Activated CD4-positive, alpha-beta T cell treated with anti-CD3 and anti-CD28 coated beads for 36 hours (primary cell): ENCODE measurements at regions of chr9 and their contacts with region 1.

Region 1: DNA sequence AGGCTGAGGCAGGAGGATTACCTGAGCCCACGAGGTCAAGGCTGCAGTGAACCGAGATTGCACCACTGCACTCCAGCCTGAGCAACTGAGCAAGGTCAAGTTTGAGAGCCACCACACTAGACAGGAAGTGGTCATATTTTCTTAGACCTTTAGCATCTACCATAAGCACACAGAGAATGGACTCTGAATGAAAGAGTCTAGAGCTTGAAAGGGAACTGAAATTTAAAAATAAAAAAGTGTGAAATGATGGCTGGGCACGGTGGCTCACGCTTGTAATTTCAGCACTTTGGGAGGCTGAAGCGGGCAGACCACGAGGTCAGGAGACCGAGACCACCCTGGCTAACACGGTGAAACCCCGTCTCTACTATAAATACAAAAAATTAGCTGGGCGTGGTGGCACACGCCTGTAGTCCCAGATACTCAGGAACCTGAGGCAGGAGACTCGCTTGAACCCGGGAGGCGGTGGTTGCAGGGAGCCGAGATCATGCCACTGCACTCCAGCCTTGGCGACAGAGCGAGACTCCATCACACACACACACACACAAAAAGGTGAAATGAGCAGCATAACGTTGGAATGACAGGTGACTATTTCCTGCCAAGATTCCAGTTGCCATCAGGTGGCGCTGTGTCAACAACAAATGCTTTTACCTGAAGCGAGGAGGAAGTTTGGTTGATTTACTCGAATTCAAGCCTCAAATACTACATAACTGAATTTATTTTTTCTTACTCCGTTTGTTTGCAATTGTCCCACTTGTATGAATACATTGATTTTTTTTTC is 21.3 kb upstream of the AK3 start:
- DNase-seq: peak; percentile 90
- ATAC-seq: peak; percentile 86
- H3K4me3 Mint-ChIP-seq: peak overlapping the region; percentile 43
- H3K27ac Mint-ChIP-seq: peak overlapping the region; percentile 55
- H3K4me1 Mint-ChIP-seq: peaks cover 15% of the 10 kb centered on the region
- H3K27me3 Mint-ChIP-seq: peaks cover 7% of the 10 kb centered on the region

Region 2: DNA sequence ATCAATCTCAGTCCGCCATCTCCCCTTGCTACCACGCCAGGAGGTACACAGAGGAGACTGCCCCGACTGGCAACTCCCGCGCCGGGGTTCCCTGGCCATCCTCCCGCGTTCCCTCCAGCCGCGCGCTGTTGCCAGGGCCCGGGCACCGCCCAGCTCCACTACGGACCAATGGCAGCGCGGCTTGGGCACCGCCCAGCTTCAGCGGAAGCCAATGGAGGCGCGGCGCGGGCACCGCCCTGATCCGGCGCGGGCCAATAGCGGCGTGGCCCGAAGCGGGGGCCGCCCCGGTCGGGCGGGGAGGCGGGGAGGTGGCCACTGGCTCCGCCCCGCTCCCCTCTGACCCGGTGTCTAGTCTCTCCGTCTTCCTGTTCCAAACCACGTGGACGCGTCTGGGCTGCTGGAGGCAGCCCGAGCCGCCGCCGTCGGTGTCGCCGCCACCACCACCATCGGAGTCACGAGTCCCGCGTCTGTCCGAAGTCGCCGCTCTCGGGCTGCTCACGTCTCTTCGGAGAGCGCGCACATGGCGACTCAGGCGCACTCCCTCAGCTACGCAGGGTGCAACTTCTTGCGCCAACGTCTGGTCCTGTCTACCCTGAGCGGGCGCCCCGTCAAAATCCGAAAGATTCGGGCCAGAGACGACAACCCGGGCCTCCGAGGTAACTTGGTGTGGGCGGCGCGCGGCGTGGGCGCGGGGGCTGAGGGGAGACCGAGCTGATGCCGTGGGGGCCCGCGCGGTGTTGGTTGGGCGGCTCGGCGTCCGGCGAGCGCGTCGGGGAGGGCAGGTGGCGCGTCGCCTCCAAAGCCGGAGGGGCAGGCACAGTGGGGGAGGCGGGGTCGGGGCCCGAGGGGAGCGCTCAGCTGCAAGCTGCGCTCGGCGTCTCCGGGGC is 30.5 kb after region 1 on chr9 and contains the start of gene RCL1:
- CTCF ChIA-PET with region 1: interaction called, 21 read pairs
- POLR2A ChIA-PET with region 1: interaction called, 3 read pairs
- intact Hi-C with region 1: loop called (anchors 2 to 5 kb)
- DNase-seq: peak; percentile 98
- ATAC-seq: peak; percentile 96
- H3K4me3 Mint-ChIP-seq: peak within 1 kb of the TSS; percentile 97
- H3K27ac Mint-ChIP-seq: peak within 1 kb of the TSS; percentile 89
- H3K4me1 Mint-ChIP-seq: peaks cover 44% of the 10 kb centered on the region
- H3K27me3 Mint-ChIP-seq: no peaks in the 10 kb centered on the region
- total RNA-seq, gene RCL1: 27.0 to 36.4 TPM

Region 3: GRCh38 chr9:4862506-4863250 is 100.4 kb after region 1 on chr9:
- CTCF ChIA-PET with region 1: interaction called, 3 read pairs
- POLR2A ChIA-PET with region 1: no interaction called
- intact Hi-C with region 1: loop called in 1 of 2 experiments (anchors 10 kb)
- DNase-seq: no peak
- ATAC-seq: no peak
- H3K4me3 Mint-ChIP-seq: no peak overlapping the region
- H3K27ac Mint-ChIP-seq: no peak overlapping the region
- H3K4me1 Mint-ChIP-seq: peaks cover 20% of the 10 kb centered on the region
- H3K27me3 Mint-ChIP-seq: no peaks in the 10 kb centered on the region

Region 4: GRCh38 chr9:4994166-4994890 is 232.0 kb after region 1 on chr9:
- CTCF ChIA-PET with region 1: interaction called, 95 read pairs
- POLR2A ChIA-PET with region 1: no interaction called
- intact Hi-C with region 1: no loop called
- DNase-seq: no peak
- ATAC-seq: no peak
- H3K4me3 Mint-ChIP-seq: no peak overlapping the region
- H3K27ac Mint-ChIP-seq: no peak overlapping the region
- H3K4me1 Mint-ChIP-seq: peaks cover 52% of the 10 kb centered on the region
- H3K27me3 Mint-ChIP-seq: no peaks in the 10 kb centered on the region

Region 5: GRCh38 chr9:5425006-5425628 is 662.8 kb after region 1 on chr9:
- CTCF ChIA-PET with region 1: interaction called, 3 read pairs
- POLR2A ChIA-PET with region 1: no interaction called
- intact Hi-C with region 1: loop called (anchors 1 to 5 kb)
- DNase-seq: no peak
- ATAC-seq: peak; percentile 78
- H3K4me3 Mint-ChIP-seq: no peak overlapping the region
- H3K27ac Mint-ChIP-seq: no peak overlapping the region
- H3K4me1 Mint-ChIP-seq: peaks cover 15% of the 10 kb centered on the region
- H3K27me3 Mint-ChIP-seq: no peaks in the 10 kb centered on the region